ENCODE measurements at regions of chr13 and their contacts with region 1.

Region 1: DNA sequence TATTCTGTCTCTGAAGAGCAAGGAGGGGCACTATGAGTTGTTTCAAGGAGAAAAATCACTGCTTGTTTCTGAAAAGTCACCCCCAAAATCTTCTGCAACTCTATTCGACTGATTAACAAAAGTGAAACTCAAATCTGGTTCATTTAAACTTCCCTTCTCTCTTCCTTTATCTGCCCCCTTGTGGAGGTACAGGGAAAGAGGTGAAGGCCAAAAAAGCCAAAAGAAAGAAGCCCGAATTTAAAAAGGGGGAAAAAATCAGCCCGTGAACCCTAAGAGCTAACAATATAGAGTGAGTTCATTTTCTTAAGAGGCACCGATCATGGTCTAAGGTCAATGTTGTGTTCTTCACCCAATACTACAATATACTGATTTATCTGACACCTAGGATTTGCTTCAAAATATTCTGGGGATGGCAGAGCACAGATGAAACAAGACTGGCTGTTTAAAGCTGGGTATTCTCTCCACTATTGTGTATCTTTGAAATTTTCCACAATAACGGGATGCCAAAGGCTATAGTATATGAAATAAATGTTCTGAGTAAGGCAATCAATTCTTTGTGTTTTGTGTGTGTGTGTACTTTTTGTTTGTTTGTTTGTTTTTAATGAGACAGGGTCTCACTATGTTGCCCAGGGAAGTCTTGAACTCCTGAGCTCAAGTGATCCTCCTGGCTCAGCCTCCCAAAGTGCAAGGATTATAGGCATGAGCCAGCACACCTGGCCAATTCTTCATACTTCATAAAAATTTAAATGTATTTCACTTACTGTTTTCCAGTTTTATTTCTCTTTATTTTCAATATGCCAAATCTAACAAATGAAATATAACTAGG is 55.0 kb upstream of the EEF1AKMT1 start:
- DNase-seq: no peak
- ATAC-seq: peak; percentile 51; the same call in 1 of the 2 replicates
- H3K4me3 Mint-ChIP-seq: no peak overlapping the region
- H3K27ac Mint-ChIP-seq: peak overlapping the region; percentile 47; the same call in 1 of the 2 replicates
- H3K4me1 Mint-ChIP-seq: peaks cover 20% of the 10 kb centered on the region
- H3K27me3 Mint-ChIP-seq: no peaks in the 10 kb centered on the region
- CTCF ChIP-seq: peak; percentile 40

Region 2: GRCh38 chr13:20721454-20722357 is 107.0 kb before region 1 on chr13:
- CTCF ChIA-PET with region 1: interaction called, 12 read pairs
- POLR2A ChIA-PET with region 1: no interaction called
- DNase-seq: peak; percentile 62
- ATAC-seq: peak; percentile 71
- H3K4me3 Mint-ChIP-seq: peak overlapping the region; percentile 68
- H3K27ac Mint-ChIP-seq: no peak overlapping the region
- H3K4me1 Mint-ChIP-seq: peaks cover 18% of the 10 kb centered on the region
- H3K27me3 Mint-ChIP-seq: peaks cover 8% of the 10 kb centered on the region
- CTCF ChIP-seq: no peak

Region 3: GRCh38 chr13:20787180-20787579 is 41.6 kb before region 1 on chr13:
- CTCF ChIA-PET with region 1: interaction called, 11 read pairs
- POLR2A ChIA-PET with region 1: no interaction called
- DNase-seq: no peak
- ATAC-seq: no peak
- H3K4me3 Mint-ChIP-seq: no peak overlapping the region
- H3K27ac Mint-ChIP-seq: no peak overlapping the region
- H3K4me1 Mint-ChIP-seq: no peaks in the 10 kb centered on the region
- H3K27me3 Mint-ChIP-seq: no peaks in the 10 kb centered on the region
- CTCF ChIP-seq: no peak

Region 4: GRCh38 chr13:20814224-20814910 is 14.4 kb before region 1 on chr13:
- CTCF ChIA-PET with region 1: interaction called, 20 read pairs
- POLR2A ChIA-PET with region 1: no interaction called
- DNase-seq: no peak
- ATAC-seq: no peak
- H3K4me3 Mint-ChIP-seq: no peak overlapping the region
- H3K27ac Mint-ChIP-seq: no peak overlapping the region
- H3K4me1 Mint-ChIP-seq: no peaks in the 10 kb centered on the region
- H3K27me3 Mint-ChIP-seq: no peaks in the 10 kb centered on the region
- CTCF ChIP-seq: no peak

Region 5: DNA sequence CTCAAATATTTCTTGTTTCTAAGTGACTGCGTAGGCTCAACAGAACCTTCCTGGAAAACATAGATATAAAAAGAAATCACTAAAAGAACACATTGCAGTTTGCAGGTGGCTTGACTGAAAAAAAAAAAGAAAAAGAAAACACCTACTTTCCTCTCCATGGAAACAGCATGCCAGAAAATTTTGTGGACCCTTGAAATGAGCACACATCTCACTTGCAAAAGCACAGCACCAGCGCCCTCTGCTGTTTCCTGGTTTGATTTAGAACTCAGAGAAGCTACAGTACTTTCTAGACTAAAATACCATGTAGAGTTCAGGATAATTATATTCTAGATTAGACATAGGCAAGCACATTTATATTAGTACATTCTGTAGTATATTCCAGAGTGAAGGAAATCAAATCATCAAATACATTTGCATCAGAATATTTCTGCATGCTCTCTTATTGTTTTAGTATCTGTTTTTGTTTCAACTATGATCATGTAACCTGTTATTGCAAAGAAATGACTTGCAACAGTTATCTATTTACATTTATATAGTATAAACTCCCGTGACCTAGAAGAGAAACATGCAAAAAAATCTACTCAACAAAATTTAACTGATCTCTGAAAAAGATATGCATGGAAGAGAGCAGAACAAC is 96.1 kb after region 1 on chr13:
- CTCF ChIA-PET with region 1: interaction called, 16 read pairs
- POLR2A ChIA-PET with region 1: no interaction called
- DNase-seq: peak; percentile 87
- ATAC-seq: peak; percentile 78
- H3K4me3 Mint-ChIP-seq: no peak overlapping the region
- H3K27ac Mint-ChIP-seq: no peak overlapping the region
- H3K4me1 Mint-ChIP-seq: peaks cover 6% of the 10 kb centered on the region; the same call in 1 of the 2 replicates
- H3K27me3 Mint-ChIP-seq: no peaks in the 10 kb centered on the region
- CTCF ChIP-seq: peak; percentile 49

Measured in WTC11 (cell line).